ENCODE measurements at regions of chr19 and their contacts with region 1.

Region 1: DNA sequence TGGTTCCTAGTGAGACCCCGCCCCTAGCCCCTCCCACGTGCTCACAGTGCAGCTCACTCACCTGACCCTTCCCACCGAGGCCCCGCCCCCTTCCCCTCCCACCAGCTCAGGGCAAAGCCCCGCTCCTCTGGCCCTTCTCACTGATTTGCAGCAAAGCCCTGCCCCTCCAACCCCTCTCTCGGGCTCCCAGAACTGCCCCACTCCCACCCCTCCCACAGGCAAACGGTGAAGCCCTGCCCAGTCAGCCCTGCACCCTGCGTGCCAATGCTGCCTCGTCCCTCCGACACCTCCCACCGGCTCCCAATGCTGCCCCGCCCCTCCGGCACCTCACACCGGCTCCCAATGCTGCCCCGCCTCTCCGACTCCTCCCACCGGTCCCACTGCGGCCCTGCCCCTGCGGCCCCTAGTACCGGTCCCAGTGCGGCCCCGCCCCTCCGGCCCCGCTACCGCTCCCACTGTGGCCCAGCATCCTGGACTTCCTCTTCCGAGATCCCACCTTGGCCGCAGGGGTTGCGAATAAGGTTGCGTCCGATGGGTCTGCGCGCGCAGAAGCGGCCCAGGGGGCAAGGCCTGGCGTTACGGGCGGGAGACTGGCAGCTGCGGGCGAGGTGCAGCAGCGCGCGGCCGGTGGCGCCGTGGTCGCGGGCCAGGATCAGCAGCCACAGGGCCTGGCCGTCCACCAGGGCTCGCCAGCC is 834 bp downstream of the FBXO27 start:
- DNase-seq: peak; percentile 67 to 86
- H3K4me3 ChIP-seq: peak overlapping the region; percentile 62 to 78
- H3K27ac ChIP-seq: peak overlapping the region; percentile 16 to 78
- H3K4me1 ChIP-seq: peaks cover 0 to 7% of the 10 kb centered on the region in 2 donors
- H3K27me3 ChIP-seq: no peaks in the 10 kb centered on the region
- CTCF ChIP-seq: no peak

Region 2: DNA sequence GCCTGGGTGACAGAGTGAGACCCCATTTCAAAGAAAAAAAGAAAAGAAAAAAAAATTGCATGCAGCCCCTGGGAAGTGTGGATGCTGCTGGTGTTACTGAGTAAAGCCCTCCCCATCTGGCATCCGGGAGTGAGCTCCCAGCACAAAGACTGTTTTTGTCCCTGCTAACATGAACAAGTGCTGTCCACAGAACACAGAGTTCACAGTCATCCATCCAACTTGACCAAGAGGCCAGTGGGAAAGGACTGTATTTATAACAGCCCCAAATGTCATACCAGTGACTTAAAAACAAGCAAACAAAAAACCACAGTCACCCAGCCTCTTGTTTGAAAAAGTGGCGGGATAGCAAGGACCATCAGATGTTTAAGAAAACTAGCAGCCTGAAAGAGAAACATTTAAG is 66.8 kb before region 1 on chr19:
- intact Hi-C with region 1: loop called (anchors 5 kb)
- DNase-seq: no peak
- H3K4me3 ChIP-seq: no peak overlapping the region
- H3K27ac ChIP-seq: no peak overlapping the region
- H3K4me1 ChIP-seq: no peaks in the 10 kb centered on the region
- H3K27me3 ChIP-seq: no peaks in the 10 kb centered on the region
- CTCF ChIP-seq: no peak

Region 3: GRCh38 chr19:38975214-38975860 is 56.2 kb before region 1 on chr19 and contains the start of gene FBXO17:
- intact Hi-C with region 1: loop called (anchors 2 kb)
- DNase-seq: peak in 1 of 2 donors; percentile 75
- H3K4me3 ChIP-seq: peak within 1 kb of the TSS; percentile 75 to 88
- H3K27ac ChIP-seq: peak within 1 kb of the TSS; percentile 91 to 94
- H3K4me1 ChIP-seq: peaks cover 0 to 11% of the 10 kb centered on the region in 2 donors
- H3K27me3 ChIP-seq: no peaks in the 10 kb centered on the region
- CTCF ChIP-seq: no peak
- total RNA-seq, gene FBXO17: 47.4 TPM

Measured in ascending aorta (tissue), 2 donors.